ENCODE measurements at regions of chr2 and their contacts with region 1.

Region 1: GRCh38 chr2:240851078-240851991 is 17.3 kb upstream of the AGXT start:
- DNase-seq: peak; percentile 57 to 83 (median 71)
- ATAC-seq: peak; percentile 92
- H3K4me3 ChIP-seq: no peak overlapping the region
- H3K4me3 Mint-ChIP-seq: no peak overlapping the region
- H3K27ac ChIP-seq: no peak overlapping the region
- H3K27ac Mint-ChIP-seq: peak overlapping the region in 1 of 9 donors; percentile 1
- H3K4me1 ChIP-seq: no peaks in the 10 kb centered on the region
- H3K4me1 Mint-ChIP-seq: peaks cover 0 to 4% (median 0%) of the 10 kb centered on the region in 7 donors
- H3K27me3 ChIP-seq: no peaks in the 10 kb centered on the region
- H3K27me3 Mint-ChIP-seq: peaks cover 0 to 5% (median 0%) of the 10 kb centered on the region in 5 donors

Region 2: GRCh38 chr2:240832205-240832727 is 19.1 kb before region 1 on chr2:
- CTCF ChIA-PET with region 1: no interaction called
- POLR2A ChIA-PET with region 1: no interaction called
- intact Hi-C with region 1: no loop called
- DNase-seq: peak; percentile 93 to 100 (median 99)
- ATAC-seq: peak; percentile 96
- H3K4me3 ChIP-seq: peak overlapping the region; percentile 32
- H3K4me3 Mint-ChIP-seq: peak overlapping the region in 8 of 10 donors; percentile 56 to 78 (median 71)
- H3K27ac ChIP-seq: no peak overlapping the region
- H3K27ac Mint-ChIP-seq: peak overlapping the region in 4 of 9 donors; percentile 22 to 88 (median 74)
- H3K4me1 ChIP-seq: peaks cover 11 to 14% of the 10 kb centered on the region in 2 donors
- H3K4me1 Mint-ChIP-seq: peaks cover 0 to 7% (median 0%) of the 10 kb centered on the region in 7 donors
- H3K27me3 ChIP-seq: no peaks in the 10 kb centered on the region
- H3K27me3 Mint-ChIP-seq: peaks cover 4 to 30% (median 19%) of the 10 kb centered on the region in 5 donors

Region 3: GRCh38 chr2:241598480-241598879 is 747.1 kb after region 1 on chr2:
- CTCF ChIA-PET with region 1: interaction called, 5 read pairs
- POLR2A ChIA-PET with region 1: no interaction called
- intact Hi-C with region 1: loop called in 1 of 2 experiments (anchors 2 kb)
- DNase-seq: no peak
- ATAC-seq: no peak
- H3K4me3 ChIP-seq: no peak overlapping the region
- H3K4me3 Mint-ChIP-seq: no peak overlapping the region
- H3K27ac ChIP-seq: no peak overlapping the region
- H3K27ac Mint-ChIP-seq: no peak overlapping the region
- H3K4me1 ChIP-seq: no peaks in the 10 kb centered on the region
- H3K4me1 Mint-ChIP-seq: peaks cover 0 to 8% (median 0%) of the 10 kb centered on the region in 7 donors
- H3K27me3 ChIP-seq: no peaks in the 10 kb centered on the region
- H3K27me3 Mint-ChIP-seq: no peaks in the 10 kb centered on the region

Region 4: GRCh38 chr2:241659150-241659739 is 807.9 kb after region 1 on chr2:
- CTCF ChIA-PET with region 1: no interaction called
- POLR2A ChIA-PET with region 1: no interaction called
- intact Hi-C with region 1: loop called in 1 of 2 experiments (anchors 1 kb)
- DNase-seq: peak in 6 of 9 donors; percentile 15 to 53 (median 41)
- ATAC-seq: peak; percentile 41
- H3K4me3 ChIP-seq: no peak overlapping the region
- H3K4me3 Mint-ChIP-seq: no peak overlapping the region
- H3K27ac ChIP-seq: no peak overlapping the region
- H3K27ac Mint-ChIP-seq: peak overlapping the region in 1 of 9 donors; percentile 83
- H3K4me1 ChIP-seq: no peaks in the 10 kb centered on the region
- H3K4me1 Mint-ChIP-seq: peaks cover 0 to 2% (median 0%) of the 10 kb centered on the region in 7 donors
- H3K27me3 ChIP-seq: no peaks in the 10 kb centered on the region
- H3K27me3 Mint-ChIP-seq: no peaks in the 10 kb centered on the region

Region 5: GRCh38 chr2:241734467-241735208 is 883.3 kb after region 1 on chr2 and contains the start of gene D2HGDH:
- CTCF ChIA-PET with region 1: interaction called, 4 read pairs
- POLR2A ChIA-PET with region 1: no interaction called
- intact Hi-C with region 1: loop called (anchors 1 to 5 kb)
- DNase-seq: peak; percentile 85 to 99 (median 91)
- ATAC-seq: peak; percentile 98
- H3K4me3 ChIP-seq: peak within 1 kb of the TSS; percentile 88
- H3K4me3 Mint-ChIP-seq: peak within 1 kb of the TSS; percentile 79 to 89 (median 84)
- H3K27ac ChIP-seq: peak within 1 kb of the TSS; percentile 75
- H3K27ac Mint-ChIP-seq: peak within 1 kb of the TSS in 8 of 9 donors; percentile 40 to 79 (median 72)
- H3K4me1 ChIP-seq: peaks cover 9% of the 10 kb centered on the region in 2 donors
- H3K4me1 Mint-ChIP-seq: peaks cover 9 to 54% (median 43%) of the 10 kb centered on the region in 7 donors
- H3K27me3 ChIP-seq: no peaks in the 10 kb centered on the region
- H3K27me3 Mint-ChIP-seq: no peaks in the 10 kb centered on the region
- total RNA-seq, gene D2HGDH: 32.5 to 49.8 (median 41.1) TPM

Measured in naive thymus-derived CD4-positive, alpha-beta T cell (primary cell).